ENCODE measurements at regions of chr14 and their contacts with region 1.

Region 1: GRCh38 chr14:100383727-100384158 is 60.6 kb downstream of the SLC25A47 start:
- DNase-seq: peak; percentile 57
- H3K4me3 ChIP-seq: no peak overlapping the region
- H3K27ac ChIP-seq: no peak overlapping the region
- H3K4me1 ChIP-seq: peaks cover 32% of the 10 kb centered on the region
- H3K27me3 ChIP-seq: no peaks in the 10 kb centered on the region
- CTCF ChIP-seq: peak; percentile 86 to 90
- POLR2A ChIP-seq: no peak

Region 2: DNA sequence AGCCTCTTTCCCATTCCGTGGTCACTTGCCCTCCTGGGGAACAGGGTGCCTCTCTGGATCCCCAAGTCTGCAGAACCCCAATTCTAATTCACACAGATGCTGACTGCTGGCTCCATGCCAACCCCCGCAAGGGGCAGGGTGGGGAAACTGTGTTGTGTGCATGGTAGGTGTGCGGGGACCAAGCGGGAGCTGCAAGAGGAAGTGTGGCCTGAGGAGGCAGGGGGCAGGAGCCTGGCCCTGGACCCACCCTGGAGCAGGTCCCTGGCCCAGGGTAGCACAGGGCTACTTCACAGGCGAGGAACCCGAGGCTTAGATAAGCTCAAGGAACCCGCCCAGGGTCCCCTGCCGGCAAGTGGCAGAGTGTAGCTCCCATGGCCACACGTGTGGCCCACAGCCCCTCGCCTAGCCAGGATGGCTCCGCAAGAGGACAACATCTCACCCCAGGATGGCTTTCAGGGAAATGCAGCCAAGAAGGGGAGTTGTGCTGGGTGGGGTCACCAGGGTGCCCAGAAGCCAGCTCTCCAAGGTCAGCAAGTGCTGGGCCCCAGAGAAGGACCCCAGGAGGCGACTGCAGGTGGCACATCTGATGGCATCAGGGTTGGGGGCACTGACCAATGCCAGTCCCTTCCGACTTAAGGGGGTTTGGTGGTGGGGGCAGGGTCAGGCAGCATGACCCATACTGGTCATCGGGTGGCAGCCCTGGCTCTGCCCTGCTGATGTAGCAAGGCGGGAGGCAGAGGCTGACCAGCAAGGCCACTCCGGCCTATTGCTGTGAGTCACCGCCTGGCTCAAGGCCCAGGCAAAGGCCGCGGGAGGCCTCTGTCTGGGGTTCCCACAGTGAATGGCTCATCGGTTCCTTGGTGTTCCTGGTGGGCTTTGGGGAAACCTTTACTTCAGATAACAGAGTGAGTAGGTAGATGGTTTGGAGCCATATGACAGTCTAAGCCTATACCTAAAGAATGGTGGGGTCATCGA is 627.8 kb before region 1 on chr14:
- CTCF ChIA-PET with region 1: no interaction called
- POLR2A ChIA-PET with region 1: no interaction called
- dilution Hi-C with region 1: no loop called
- intact Hi-C with region 1: loop called (anchors 10 kb)
- DNase-seq: peak; percentile 93
- H3K4me3 ChIP-seq: no peak overlapping the region
- H3K27ac ChIP-seq: peak overlapping the region; percentile 83
- H3K4me1 ChIP-seq: peaks cover 81% of the 10 kb centered on the region
- H3K27me3 ChIP-seq: no peaks in the 10 kb centered on the region
- CTCF ChIP-seq: no peak
- POLR2A ChIP-seq: no peak

Region 3: DNA sequence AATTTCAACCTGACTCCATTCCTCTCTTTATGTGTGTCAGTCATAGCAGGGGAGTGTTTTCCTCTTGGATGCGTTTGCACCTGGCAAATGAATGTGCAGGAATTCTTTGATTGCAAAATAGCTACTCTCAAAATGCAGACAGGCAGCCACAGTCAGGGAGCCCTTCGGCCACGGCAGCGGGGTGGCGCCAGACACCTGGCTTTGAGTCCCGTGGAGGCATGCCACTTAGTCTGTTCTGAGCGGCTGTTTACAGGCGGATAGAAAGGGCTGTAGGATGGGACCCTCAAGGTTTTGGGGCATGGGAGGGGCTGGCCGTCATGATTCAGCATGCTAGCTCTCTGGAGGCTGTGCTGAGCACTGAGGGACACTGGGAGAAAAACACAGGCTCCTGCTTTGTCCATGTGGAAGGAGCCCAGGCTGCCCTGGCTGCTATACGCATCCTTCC is 56.5 kb after region 1 on chr14:
- CTCF ChIA-PET with region 1: interaction called, 23 read pairs
- POLR2A ChIA-PET with region 1: interaction called, 3 read pairs
- dilution Hi-C with region 1: no loop called
- intact Hi-C with region 1: no loop called
- DNase-seq: peak; percentile 50
- H3K4me3 ChIP-seq: no peak overlapping the region
- H3K27ac ChIP-seq: no peak overlapping the region
- H3K4me1 ChIP-seq: peaks cover 5% of the 10 kb centered on the region
- H3K27me3 ChIP-seq: no peaks in the 10 kb centered on the region
- CTCF ChIP-seq: peak; percentile 26 to 46
- POLR2A ChIP-seq: no peak

Region 4: GRCh38 chr14:100645192-100645990 is 261.6 kb after region 1 on chr14:
- CTCF ChIA-PET with region 1: interaction called, 326 read pairs
- POLR2A ChIA-PET with region 1: interaction called, 7 read pairs
- dilution Hi-C with region 1: no loop called
- intact Hi-C with region 1: loop called (anchors 1 kb)
- DNase-seq: peak; percentile 68
- H3K4me3 ChIP-seq: no peak overlapping the region
- H3K27ac ChIP-seq: no peak overlapping the region
- H3K4me1 ChIP-seq: peaks cover 14% of the 10 kb centered on the region
- H3K27me3 ChIP-seq: peaks cover under 1 to 4% of the 10 kb centered on the region in 2 experiments
- CTCF ChIP-seq: peak; percentile 72 to 83
- POLR2A ChIP-seq: no peak

Region 5: GRCh38 chr14:100709289-100710284 is 325.8 kb after region 1 on chr14:
- CTCF ChIA-PET with region 1: interaction called, 13 read pairs
- POLR2A ChIA-PET with region 1: no interaction called
- dilution Hi-C with region 1: no loop called
- intact Hi-C with region 1: no loop called
- DNase-seq: peak; percentile 24
- H3K4me3 ChIP-seq: no peak overlapping the region
- H3K27ac ChIP-seq: no peak overlapping the region
- H3K4me1 ChIP-seq: peaks cover 5% of the 10 kb centered on the region
- H3K27me3 ChIP-seq: no peaks in the 10 kb centered on the region
- CTCF ChIP-seq: peak; percentile 13 to 58
- POLR2A ChIP-seq: no peak

Region 6: GRCh38 chr14:101072945-101073597 is 689.3 kb after region 1 on chr14:
- CTCF ChIA-PET with region 1: no interaction called
- POLR2A ChIA-PET with region 1: no interaction called
- dilution Hi-C with region 1: no loop called
- intact Hi-C with region 1: loop called (anchors 10 kb)
- DNase-seq: peak; percentile 99
- H3K4me3 ChIP-seq: no peak overlapping the region
- H3K27ac ChIP-seq: peak overlapping the region; percentile 96
- H3K4me1 ChIP-seq: peaks cover 49% of the 10 kb centered on the region
- H3K27me3 ChIP-seq: no peaks in the 10 kb centered on the region
- CTCF ChIP-seq: peak in 1 of 2 donors; percentile 13
- POLR2A ChIP-seq: peak; percentile 22

Region 7: GRCh38 chr14:101665515-101666078 is 1281.9 kb after region 1 on chr14:
- CTCF ChIA-PET with region 1: interaction called, 18 read pairs
- POLR2A ChIA-PET with region 1: no interaction called
- dilution Hi-C with region 1: no loop called
- intact Hi-C with region 1: loop called (anchors 10 kb)
- DNase-seq: peak; percentile 37
- H3K4me3 ChIP-seq: no peak overlapping the region
- H3K27ac ChIP-seq: no peak overlapping the region
- H3K4me1 ChIP-seq: no peaks in the 10 kb centered on the region
- H3K27me3 ChIP-seq: peaks cover 7 to 31% of the 10 kb centered on the region in 2 experiments
- CTCF ChIP-seq: peak; percentile 18 to 41
- POLR2A ChIP-seq: no peak